ENCODE measurements at regions of chr18 and their contacts with region 1.

Region 1: GRCh38 chr18:74597662-74598349 is at the start of gene ZNF407:
- DNase-seq: peak; percentile 93
- H3K4me3 Mint-ChIP-seq: peak within 1 kb of the TSS; percentile 85
- H3K27ac Mint-ChIP-seq: peak within 1 kb of the TSS; percentile 99
- H3K4me1 Mint-ChIP-seq: no peaks in the 10 kb centered on the region
- H3K27me3 Mint-ChIP-seq: no peaks in the 10 kb centered on the region
- CTCF ChIP-seq: no peak
- total RNA-seq, gene ZNF407: 9.5 and 9.9 TPM in 2 replicates

Region 2: GRCh38 chr18:74163019-74163660 is 434.7 kb before region 1 on chr18:
- CTCF ChIA-PET with region 1: no interaction called
- POLR2A ChIA-PET with region 1: no interaction called
- intact Hi-C with region 1: no loop called
- DNase-seq: no peak
- H3K4me3 Mint-ChIP-seq: no peak overlapping the region
- H3K27ac Mint-ChIP-seq: no peak overlapping the region
- H3K4me1 Mint-ChIP-seq: no peaks in the 10 kb centered on the region
- H3K27me3 Mint-ChIP-seq: peaks cover 11% of the 10 kb centered on the region
- CTCF ChIP-seq: no peak

Region 3: DNA sequence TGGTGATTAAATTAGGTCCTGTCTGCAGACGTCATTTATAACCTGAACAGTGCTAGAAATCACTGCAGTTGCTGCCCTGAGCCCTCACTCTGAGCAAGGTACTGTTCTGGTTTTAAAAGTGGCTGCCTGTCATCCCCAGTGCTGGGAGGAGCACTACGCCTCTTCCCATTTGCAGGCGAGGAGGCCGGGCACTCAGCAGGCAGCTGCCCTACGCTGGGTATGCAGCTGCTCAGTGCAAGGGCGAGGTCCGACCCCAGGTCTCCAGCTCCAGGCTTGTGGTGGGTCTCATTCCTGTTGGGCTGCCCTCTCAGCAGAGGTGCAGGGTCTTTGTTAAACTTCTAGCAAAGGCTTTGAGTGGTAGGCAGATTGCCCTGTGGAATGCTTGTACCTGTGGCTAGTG is 86.0 kb before region 1 on chr18:
- CTCF ChIA-PET with region 1: no interaction called
- POLR2A ChIA-PET with region 1: no interaction called
- intact Hi-C with region 1: no loop called
- DNase-seq: no peak
- H3K4me3 Mint-ChIP-seq: no peak overlapping the region
- H3K27ac Mint-ChIP-seq: no peak overlapping the region
- H3K4me1 Mint-ChIP-seq: no peaks in the 10 kb centered on the region
- H3K27me3 Mint-ChIP-seq: no peaks in the 10 kb centered on the region
- CTCF ChIP-seq: no peak

Region 4: GRCh38 chr18:74541703-74542555 is 55.9 kb before region 1 on chr18:
- CTCF ChIA-PET with region 1: no interaction called
- POLR2A ChIA-PET with region 1: interaction called, 12 read pairs
- intact Hi-C with region 1: no loop called
- DNase-seq: peak; percentile 55
- H3K4me3 Mint-ChIP-seq: peak overlapping the region; percentile 61
- H3K27ac Mint-ChIP-seq: peak overlapping the region; percentile 67
- H3K4me1 Mint-ChIP-seq: peaks cover 19% of the 10 kb centered on the region
- H3K27me3 Mint-ChIP-seq: no peaks in the 10 kb centered on the region
- CTCF ChIP-seq: no peak

Measured in MCF 10A (cell line).